ENCODE measurements at regions of chr20 and their contacts with region 1.

Region 1: DNA sequence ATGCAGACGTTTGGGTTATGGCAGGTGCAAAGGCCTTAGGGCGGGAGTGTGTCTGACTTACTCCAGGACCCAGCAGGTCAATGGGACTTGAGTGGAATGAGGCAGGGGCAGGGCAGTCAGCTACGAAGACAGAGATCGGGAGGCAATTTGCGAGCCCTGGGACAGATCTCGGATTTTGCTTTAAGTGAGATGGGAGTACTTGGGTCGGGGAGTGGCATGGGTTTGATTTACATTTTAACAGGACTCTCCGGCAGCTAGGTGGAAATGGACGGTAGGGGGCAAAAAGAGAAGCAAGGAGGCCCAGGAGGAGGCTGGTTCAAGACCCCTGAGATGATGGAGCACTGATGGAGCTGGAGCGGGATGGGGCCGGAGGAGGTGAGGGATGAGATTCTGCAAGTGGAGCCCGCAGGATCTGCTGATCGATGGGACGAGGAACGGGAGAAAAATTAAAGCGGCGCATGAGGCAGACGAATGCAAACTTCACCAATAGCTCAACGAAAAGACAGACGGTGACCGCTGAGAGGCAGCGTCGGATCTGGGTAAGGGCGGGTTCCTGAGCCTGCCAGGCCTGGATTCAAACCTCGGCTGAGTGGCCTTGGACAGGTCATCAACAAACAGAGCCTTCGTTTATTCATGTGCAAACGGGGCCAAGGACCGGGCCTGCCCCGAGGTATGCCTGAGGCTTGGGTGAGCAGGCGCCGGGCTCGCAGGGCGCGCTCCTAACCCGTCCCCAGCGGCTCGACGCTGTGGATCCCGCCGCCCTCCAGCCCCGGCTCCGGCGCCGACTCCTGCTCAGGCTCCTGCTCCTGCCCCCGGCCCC is 756 bp upstream of the RBCK1 start:
- DNase-seq: peak; percentile 85
- H3K4me3 ChIP-seq: peak overlapping the region; percentile 69
- H3K27ac ChIP-seq: peak overlapping the region; percentile 84
- H3K4me1 ChIP-seq: peaks cover 51% of the 10 kb centered on the region
- CTCF ChIP-seq: peak; percentile 77

Region 2: DNA sequence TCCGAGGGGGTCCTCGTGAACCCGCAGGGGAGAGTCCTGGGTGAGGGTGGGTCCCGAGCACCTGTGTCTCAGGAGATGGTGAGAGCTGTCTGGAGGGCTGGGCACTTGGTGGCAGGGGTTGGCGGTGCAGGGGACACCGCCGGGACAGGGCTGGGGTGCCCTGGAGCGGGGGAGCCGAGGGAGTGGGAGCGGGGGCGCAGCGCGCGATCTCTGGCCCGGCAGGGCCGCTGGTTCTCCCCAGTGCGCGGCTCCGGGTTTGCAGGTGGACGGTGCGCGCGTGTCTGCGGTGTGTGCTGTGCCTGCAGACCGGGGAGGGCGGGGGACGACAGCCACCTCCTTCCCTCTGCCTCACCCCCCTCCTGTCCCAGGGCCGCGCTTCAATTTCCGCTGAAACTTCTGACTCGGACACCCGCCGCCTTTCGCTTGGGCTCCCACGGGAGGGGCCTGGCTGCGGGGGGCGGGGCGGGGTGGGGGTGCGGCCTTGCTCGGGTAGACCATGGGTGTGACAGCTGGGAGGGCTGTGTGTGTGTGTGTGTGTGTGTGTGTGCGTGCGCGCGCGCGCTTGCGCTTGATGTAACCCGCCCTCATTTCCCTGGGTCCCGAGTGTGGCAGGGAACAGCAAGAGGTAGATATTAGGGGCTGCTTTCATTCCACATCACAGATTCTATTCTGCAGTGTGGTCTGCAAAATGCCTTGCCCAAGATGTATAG is 25.6 kb before region 1 on chr20:
- CTCF ChIA-PET with region 1: interaction called, 3 read pairs
- POLR2A ChIA-PET with region 1: interaction called, 44 read pairs
- intact Hi-C with region 1: loop called (anchors 2 kb)
- DNase-seq: peak; percentile 92
- H3K4me3 ChIP-seq: peak overlapping the region; percentile 92
- H3K27ac ChIP-seq: peak overlapping the region; percentile 90
- H3K4me1 ChIP-seq: peaks cover 42% of the 10 kb centered on the region
- CTCF ChIP-seq: no peak; the same call in 1 of the 2 replicates

Region 3: DNA sequence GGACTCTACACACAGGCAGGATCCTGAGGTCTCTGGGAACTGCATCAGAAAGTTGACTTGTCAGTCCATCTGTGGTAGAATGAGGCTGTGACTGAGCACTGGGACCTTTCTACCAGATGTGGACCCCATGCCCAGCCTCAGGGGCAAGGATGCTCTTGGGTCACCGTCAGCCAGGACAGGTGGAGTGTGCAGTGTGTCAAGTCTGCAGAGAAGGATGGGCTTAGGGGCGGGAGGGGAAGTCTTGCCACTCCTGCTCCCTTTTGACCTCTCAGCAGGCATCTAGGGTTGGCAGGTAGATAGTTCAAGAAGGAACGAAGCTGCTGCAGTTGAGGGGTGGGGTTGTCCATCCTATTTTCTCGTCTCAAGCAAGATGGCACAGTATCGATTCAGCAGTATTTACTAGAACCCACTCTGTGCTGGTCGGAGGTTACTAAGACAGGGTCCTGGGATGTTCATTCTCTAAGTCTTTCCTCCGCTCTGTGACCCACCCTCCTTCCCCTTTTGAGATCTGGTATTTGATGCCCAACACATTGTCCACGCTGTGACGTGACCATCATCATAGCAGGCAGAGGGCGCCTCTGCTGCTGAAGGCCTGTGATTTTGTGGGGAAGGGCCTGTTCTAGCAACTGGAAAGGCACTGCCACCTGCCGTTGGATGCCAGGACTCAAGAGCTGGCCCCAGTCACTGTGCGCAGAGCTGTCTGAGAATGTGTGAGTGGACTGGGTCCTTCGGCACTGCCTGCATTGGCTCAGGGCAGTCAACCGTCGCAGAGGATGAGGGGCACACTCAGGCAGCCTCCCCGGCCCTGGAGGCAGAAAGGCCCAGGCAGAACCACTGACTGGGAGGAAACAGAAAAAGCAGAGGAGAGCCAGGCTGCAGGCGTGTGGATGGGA is 23.9 kb after region 1 on chr20:
- CTCF ChIA-PET with region 1: interaction called, 3 read pairs
- POLR2A ChIA-PET with region 1: no interaction called
- intact Hi-C with region 1: loop called (anchors 1 kb)
- DNase-seq: peak; percentile 83
- H3K4me3 ChIP-seq: no peak overlapping the region
- H3K27ac ChIP-seq: no peak overlapping the region
- H3K4me1 ChIP-seq: peaks cover 5% of the 10 kb centered on the region
- CTCF ChIP-seq: peak; percentile 86

Region 4: GRCh38 chr20:561437-562231 is 154.3 kb after region 1 on chr20:
- CTCF ChIA-PET with region 1: no interaction called
- POLR2A ChIA-PET with region 1: no interaction called
- intact Hi-C with region 1: no loop called
- DNase-seq: peak; percentile 74
- H3K4me3 ChIP-seq: no peak overlapping the region
- H3K27ac ChIP-seq: no peak overlapping the region
- H3K4me1 ChIP-seq: peaks cover 3% of the 10 kb centered on the region
- CTCF ChIP-seq: peak; percentile 95

Measured in OCI-LY7 (cell line).